T-cell (primary cell): ENCODE measurements at regions of chr17 and their contacts with region 1.

Region 1: GRCh38 chr17:64025732-64026294 is 5.4 kb upstream of the ICAM2 start:
- DNase-seq: peak; percentile 87 to 98 (median 96)
- ATAC-seq: peak; percentile 84 to 87 (median 87)
- H3K4me3 ChIP-seq: peak overlapping the region; percentile 7 to 30
- H3K4me3 Mint-ChIP-seq: peak overlapping the region; percentile 76 to 80 (median 76)
- H3K27ac ChIP-seq: peak overlapping the region; percentile 98
- H3K27ac Mint-ChIP-seq: peak overlapping the region; percentile 96 to 100
- H3K4me1 ChIP-seq: peaks cover 39 to 71% of the 10 kb centered on the region in 2 experiments
- H3K4me1 Mint-ChIP-seq: peaks cover 69 to 75% (median 72%) of the 10 kb centered on the region in 3 donors
- H3K27me3 ChIP-seq: no peaks in the 10 kb centered on the region
- H3K27me3 Mint-ChIP-seq: no peaks in the 10 kb centered on the region

Region 2: DNA sequence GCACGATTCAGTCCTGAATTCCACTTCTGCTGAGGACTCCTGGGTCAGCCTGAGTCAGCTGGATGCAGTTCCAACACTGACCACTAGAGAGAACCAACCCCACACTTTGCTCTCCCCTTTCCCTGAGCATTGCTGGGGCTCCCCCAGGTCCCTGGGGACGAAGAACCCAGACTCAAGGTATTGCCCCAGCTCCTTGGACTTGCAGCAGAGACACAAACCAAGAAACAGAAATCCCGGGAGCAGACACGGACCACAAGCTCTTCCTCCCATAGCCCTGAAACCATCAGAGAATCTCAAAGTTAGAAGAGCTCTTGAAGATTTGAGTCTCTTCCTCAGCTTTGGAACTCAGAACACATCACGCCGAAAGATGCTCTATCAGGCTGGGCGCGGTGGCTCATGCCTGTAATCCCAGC is 106.5 kb before region 1 on chr17:
- CTCF ChIA-PET with region 1: interaction called, 8 to 23 read pairs
- POLR2A ChIA-PET with region 1: no interaction called
- DNase-seq: peak; percentile 37 to 89 (median 61)
- ATAC-seq: peak; percentile 91 to 99 (median 94)
- H3K4me3 ChIP-seq: no peak overlapping the region
- H3K4me3 Mint-ChIP-seq: no peak overlapping the region
- H3K27ac ChIP-seq: no peak overlapping the region
- H3K27ac Mint-ChIP-seq: peak overlapping the region; percentile 5 to 69
- H3K4me1 ChIP-seq: peaks cover 0 to 10% of the 10 kb centered on the region in 2 experiments
- H3K4me1 Mint-ChIP-seq: peaks cover 8 to 13% (median 9%) of the 10 kb centered on the region in 3 donors
- H3K27me3 ChIP-seq: peaks cover 0 to 7% of the 10 kb centered on the region in 2 experiments
- H3K27me3 Mint-ChIP-seq: peaks cover 3 to 4% of the 10 kb centered on the region in 2 donors

Region 3: GRCh38 chr17:63946440-63947367 is 79.1 kb before region 1 on chr17:
- CTCF ChIA-PET with region 1: interaction called, 8 to 35 read pairs
- POLR2A ChIA-PET with region 1: no interaction called
- DNase-seq: peak in 32 of 35 experiments; percentile 6 to 79 (median 40)
- ATAC-seq: peak; percentile 71 to 86 (median 82)
- H3K4me3 ChIP-seq: peak overlapping the region; percentile 2 to 18
- H3K4me3 Mint-ChIP-seq: peak overlapping the region; percentile 51 to 70 (median 59)
- H3K27ac ChIP-seq: no peak overlapping the region
- H3K27ac Mint-ChIP-seq: no peak overlapping the region
- H3K4me1 ChIP-seq: peaks cover 3 to 28% of the 10 kb centered on the region in 2 experiments
- H3K4me1 Mint-ChIP-seq: peaks cover 15 to 27% (median 17%) of the 10 kb centered on the region in 3 donors
- H3K27me3 ChIP-seq: peaks cover 0 to 7% of the 10 kb centered on the region in 2 experiments
- H3K27me3 Mint-ChIP-seq: no peaks in the 10 kb centered on the region

Region 4: GRCh38 chr17:63988741-63989621 is 36.8 kb before region 1 on chr17:
- CTCF ChIA-PET with region 1: interaction called, 7 to 13 read pairs
- POLR2A ChIA-PET with region 1: interaction called in 1 of 2 experiments, 4 read pairs
- DNase-seq: no peak
- ATAC-seq: no peak
- H3K4me3 ChIP-seq: no peak overlapping the region
- H3K4me3 Mint-ChIP-seq: no peak overlapping the region
- H3K27ac ChIP-seq: no peak overlapping the region
- H3K27ac Mint-ChIP-seq: peak overlapping the region in 1 of 2 donors; percentile 57
- H3K4me1 ChIP-seq: peaks cover 2 to 64% of the 10 kb centered on the region in 2 experiments
- H3K4me1 Mint-ChIP-seq: peaks cover 44 to 63% (median 48%) of the 10 kb centered on the region in 3 donors
- H3K27me3 ChIP-seq: peaks cover 0 to 7% of the 10 kb centered on the region in 2 experiments
- H3K27me3 Mint-ChIP-seq: no peaks in the 10 kb centered on the region

Region 5: DNA sequence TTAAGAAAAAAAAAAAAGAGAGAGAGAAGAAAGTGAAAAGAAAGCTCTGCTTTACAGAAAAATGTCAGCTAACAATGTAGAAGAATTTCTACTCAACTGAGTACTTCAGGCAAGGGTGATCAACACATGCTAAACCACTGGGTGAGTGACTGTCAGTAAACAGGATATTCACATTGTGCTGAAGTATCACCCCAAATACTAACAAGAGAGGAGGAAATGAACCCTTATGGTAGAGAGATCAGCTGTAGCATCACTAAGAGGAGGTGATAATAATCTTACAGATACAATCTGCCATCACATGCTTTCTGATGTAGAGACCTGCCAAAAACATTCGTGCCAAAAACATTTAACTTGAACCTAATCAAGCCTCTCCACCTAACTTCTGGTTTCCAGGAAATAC is 25.3 kb after region 1 on chr17:
- CTCF ChIA-PET with region 1: interaction called in 1 of 2 experiments, 22 read pairs
- POLR2A ChIA-PET with region 1: no interaction called
- DNase-seq: peak in 18 of 35 experiments; percentile 6 to 72 (median 26)
- ATAC-seq: peak; percentile 99 to 100 (median 100)
- H3K4me3 ChIP-seq: no peak overlapping the region
- H3K4me3 Mint-ChIP-seq: peak overlapping the region; percentile 41 to 52 (median 52)
- H3K27ac ChIP-seq: peak overlapping the region; percentile 78
- H3K27ac Mint-ChIP-seq: peak overlapping the region; percentile 92 to 97
- H3K4me1 ChIP-seq: peaks cover 14 to 41% of the 10 kb centered on the region in 2 experiments
- H3K4me1 Mint-ChIP-seq: peaks cover 31 to 67% (median 38%) of the 10 kb centered on the region in 3 donors
- H3K27me3 ChIP-seq: no peaks in the 10 kb centered on the region
- H3K27me3 Mint-ChIP-seq: no peaks in the 10 kb centered on the region

Region 6: GRCh38 chr17:64063766-64064224 is 38.0 kb after region 1 on chr17:
- CTCF ChIA-PET with region 1: interaction called, 8 to 13 read pairs
- POLR2A ChIA-PET with region 1: interaction called in 1 of 2 experiments, 5 read pairs
- DNase-seq: peak; percentile 22 to 71 (median 53)
- ATAC-seq: peak; percentile 49 to 76 (median 62)
- H3K4me3 ChIP-seq: peak overlapping the region in 1 of 2 donors; percentile 51
- H3K4me3 Mint-ChIP-seq: peak overlapping the region in 2 of 3 donors; percentile 66 to 86
- H3K27ac ChIP-seq: peak overlapping the region; percentile 68
- H3K27ac Mint-ChIP-seq: peak overlapping the region in 1 of 2 donors; percentile 96
- H3K4me1 ChIP-seq: peaks cover 8 to 80% of the 10 kb centered on the region in 2 experiments
- H3K4me1 Mint-ChIP-seq: peaks cover 6 to 98% (median 69%) of the 10 kb centered on the region in 3 donors
- H3K27me3 ChIP-seq: no peaks in the 10 kb centered on the region
- H3K27me3 Mint-ChIP-seq: no peaks in the 10 kb centered on the region

Region 7: GRCh38 chr17:64145757-64146417 is 120.1 kb after region 1 on chr17:
- CTCF ChIA-PET with region 1: interaction called in 1 of 2 experiments, 17 read pairs
- POLR2A ChIA-PET with region 1: interaction called, 12 to 18 read pairs
- DNase-seq: peak; percentile 90 to 98 (median 95)
- ATAC-seq: peak; percentile 91 to 95 (median 94)
- H3K4me3 ChIP-seq: peak overlapping the region; percentile 55 to 77
- H3K4me3 Mint-ChIP-seq: no peak overlapping the region
- H3K27ac ChIP-seq: peak overlapping the region; percentile 87
- H3K27ac Mint-ChIP-seq: no peak overlapping the region
- H3K4me1 ChIP-seq: peaks cover 14 to 18% of the 10 kb centered on the region in 2 experiments
- H3K4me1 Mint-ChIP-seq: peaks cover 24 to 28% (median 24%) of the 10 kb centered on the region in 3 donors
- H3K27me3 ChIP-seq: no peaks in the 10 kb centered on the region
- H3K27me3 Mint-ChIP-seq: no peaks in the 10 kb centered on the region